ENCODE measurements at regions of chr18 and their contacts with region 1.

Region 1: DNA sequence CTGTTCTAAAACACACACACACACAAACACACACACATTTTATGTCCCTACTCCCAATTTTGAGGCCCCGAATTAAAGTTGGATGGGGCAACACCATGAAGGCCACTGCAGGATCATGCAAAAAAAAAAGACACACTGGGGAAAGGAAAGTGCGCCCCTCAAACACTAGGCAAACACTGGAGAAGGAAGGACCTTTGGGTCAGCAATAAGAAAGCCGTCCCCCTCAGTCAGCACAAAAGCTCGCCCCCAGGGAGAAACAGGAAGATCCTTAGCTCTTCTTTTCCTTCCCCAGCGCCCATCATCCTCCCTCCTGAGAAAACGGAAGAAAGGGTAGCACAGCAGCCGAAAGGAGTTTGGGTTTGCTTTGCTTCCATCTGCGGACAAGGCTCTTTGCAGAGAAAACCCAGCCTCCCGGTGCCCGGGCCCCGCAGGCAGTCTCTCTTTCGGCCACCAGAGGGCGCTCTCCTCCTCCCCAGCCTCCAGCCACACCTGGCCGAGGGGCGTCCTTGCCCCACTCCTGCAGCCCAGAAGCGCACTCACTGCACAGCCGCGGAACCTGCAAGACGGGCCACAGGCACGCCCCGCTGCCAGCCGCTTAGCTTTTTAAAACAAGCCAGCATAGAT is 248.5 kb downstream of the CDH20 start:
- DNase-seq: peak; percentile 59
- ATAC-seq: peak; percentile 58
- H3K4me3 ChIP-seq: no peak overlapping the region
- H3K4me3 Mint-ChIP-seq: no peak overlapping the region
- H3K27ac ChIP-seq: no peak overlapping the region
- H3K27ac Mint-ChIP-seq: no peak overlapping the region
- H3K4me1 ChIP-seq: peaks cover 5 to 6% of the 10 kb centered on the region in 2 donors
- H3K4me1 Mint-ChIP-seq: peaks cover 6% of the 10 kb centered on the region
- H3K27me3 ChIP-seq: peaks cover 0 to 20% (median 5%) of the 10 kb centered on the region in 4 experiments
- H3K27me3 Mint-ChIP-seq: peaks cover 40% of the 10 kb centered on the region
- CTCF ChIP-seq: peak; percentile 90

Region 2: DNA sequence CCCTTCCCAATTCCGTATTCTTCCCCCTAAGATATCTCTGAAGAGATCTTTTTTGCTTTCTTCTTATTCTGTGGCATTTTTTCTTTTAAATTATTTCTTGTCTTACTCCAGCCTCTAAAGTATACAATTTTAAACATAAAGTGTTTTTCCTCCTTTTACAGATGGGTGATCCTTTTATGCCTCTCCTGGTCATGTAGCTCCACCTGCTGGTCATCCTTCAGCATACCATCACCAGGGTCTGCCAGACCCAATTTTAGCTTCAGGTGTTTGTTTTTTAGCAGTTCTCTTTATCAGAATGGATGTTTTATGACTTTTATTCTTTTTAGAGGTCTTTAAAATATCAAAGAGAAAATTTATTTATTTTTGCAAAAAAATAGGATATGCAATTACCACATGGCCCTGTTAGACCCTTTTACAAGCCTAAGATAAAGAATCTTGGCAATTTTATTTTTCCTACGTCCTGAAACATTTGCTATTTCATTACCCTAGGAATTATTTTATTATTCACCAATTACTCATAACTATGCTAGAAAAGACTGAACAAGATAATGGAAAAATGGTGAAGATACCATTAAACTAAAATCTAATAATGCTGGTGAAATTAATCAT is 549.7 kb after region 1 on chr18:
- CTCF ChIA-PET with region 1: interaction called, 10 read pairs
- POLR2A ChIA-PET with region 1: no interaction called
- intact Hi-C with region 1: no loop called
- DNase-seq: peak; percentile 56
- ATAC-seq: no peak
- H3K4me3 ChIP-seq: no peak overlapping the region
- H3K4me3 Mint-ChIP-seq: no peak overlapping the region
- H3K27ac ChIP-seq: no peak overlapping the region
- H3K27ac Mint-ChIP-seq: no peak overlapping the region
- H3K4me1 ChIP-seq: no peaks in the 10 kb centered on the region
- H3K4me1 Mint-ChIP-seq: no peaks in the 10 kb centered on the region
- H3K27me3 ChIP-seq: no peaks in the 10 kb centered on the region
- H3K27me3 Mint-ChIP-seq: no peaks in the 10 kb centered on the region
- CTCF ChIP-seq: peak; percentile 96

Measured in B cell (primary cell).